ENCODE measurements at regions of chr21 and their contacts with region 1.

Region 1: DNA sequence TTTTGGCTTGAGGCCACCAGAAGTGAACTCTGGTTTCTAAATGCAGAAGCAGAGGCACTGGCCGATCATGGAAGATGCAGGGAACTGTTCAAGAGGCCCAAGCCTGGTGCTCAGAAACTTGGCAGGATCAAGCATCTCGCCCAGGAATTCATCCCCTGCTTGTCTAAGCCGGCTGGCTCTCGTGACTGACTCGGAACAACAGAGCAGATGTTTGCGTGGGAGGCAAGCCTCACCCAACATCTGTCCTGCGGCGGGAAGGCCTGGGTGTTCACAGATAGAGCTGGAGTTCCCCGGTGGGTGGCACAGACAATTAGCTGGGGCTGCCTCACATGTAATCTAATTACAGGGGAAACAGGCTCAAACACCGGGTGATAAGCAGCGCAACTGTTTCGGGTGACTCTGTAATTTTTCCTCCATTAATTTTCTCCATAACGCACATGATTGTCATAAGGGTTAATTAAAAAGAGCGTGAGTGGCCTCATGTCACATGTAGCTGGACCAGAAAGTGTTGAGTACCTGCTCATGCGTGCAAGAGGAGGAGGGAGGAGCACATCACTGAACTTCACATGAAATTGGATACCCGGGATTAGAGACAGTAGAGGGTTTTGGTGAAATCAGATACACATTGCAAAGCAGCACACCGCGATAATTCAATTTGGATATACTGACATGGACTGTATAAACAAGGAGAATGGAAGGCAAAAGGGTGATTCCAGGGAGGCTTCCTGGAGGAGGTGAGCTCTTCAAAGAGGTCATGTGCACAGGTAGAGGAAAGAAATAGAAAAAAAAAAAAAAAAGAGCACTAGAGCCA is 180.0 kb downstream of the ETS2 start:
- DNase-seq: peak; percentile 59
- H3K4me3 ChIP-seq: no peak overlapping the region
- H3K27ac ChIP-seq: peak overlapping the region; percentile 65 to 84 (median 72)
- H3K4me1 ChIP-seq: peaks cover 32 to 61% (median 42%) of the 10 kb centered on the region in 4 donors
- H3K27me3 ChIP-seq: no peaks in the 10 kb centered on the region
- CTCF ChIP-seq: no peak
- EP300 ChIP-seq: no peak
- POLR2A ChIP-seq: no peak

Region 2: GRCh38 chr21:38755681-38756371 is 229.9 kb before region 1 on chr21:
- in situ Hi-C with region 1: no loop called
- intact Hi-C with region 1: loop called (anchors 10 kb)
- DNase-seq: no peak
- H3K4me3 ChIP-seq: no peak overlapping the region
- H3K27ac ChIP-seq: peak overlapping the region; percentile 60 to 77 (median 76)
- H3K4me1 ChIP-seq: peaks cover 0 to 37% (median 18%) of the 10 kb centered on the region in 4 donors
- H3K27me3 ChIP-seq: no peaks in the 10 kb centered on the region
- CTCF ChIP-seq: no peak
- EP300 ChIP-seq: no peak
- POLR2A ChIP-seq: no peak

Region 3: GRCh38 chr21:38819714-38820183 is 166.0 kb before region 1 on chr21:
- in situ Hi-C with region 1: no loop called
- intact Hi-C with region 1: loop called (anchors 5 kb)
- DNase-seq: peak; percentile 68
- H3K4me3 ChIP-seq: no peak overlapping the region
- H3K27ac ChIP-seq: peak overlapping the region; percentile 72 to 84 (median 78)
- H3K4me1 ChIP-seq: peaks cover 33 to 93% (median 87%) of the 10 kb centered on the region in 4 donors
- H3K27me3 ChIP-seq: no peaks in the 10 kb centered on the region
- CTCF ChIP-seq: no peak
- EP300 ChIP-seq: peak; percentile 22
- POLR2A ChIP-seq: no peak

Region 4: DNA sequence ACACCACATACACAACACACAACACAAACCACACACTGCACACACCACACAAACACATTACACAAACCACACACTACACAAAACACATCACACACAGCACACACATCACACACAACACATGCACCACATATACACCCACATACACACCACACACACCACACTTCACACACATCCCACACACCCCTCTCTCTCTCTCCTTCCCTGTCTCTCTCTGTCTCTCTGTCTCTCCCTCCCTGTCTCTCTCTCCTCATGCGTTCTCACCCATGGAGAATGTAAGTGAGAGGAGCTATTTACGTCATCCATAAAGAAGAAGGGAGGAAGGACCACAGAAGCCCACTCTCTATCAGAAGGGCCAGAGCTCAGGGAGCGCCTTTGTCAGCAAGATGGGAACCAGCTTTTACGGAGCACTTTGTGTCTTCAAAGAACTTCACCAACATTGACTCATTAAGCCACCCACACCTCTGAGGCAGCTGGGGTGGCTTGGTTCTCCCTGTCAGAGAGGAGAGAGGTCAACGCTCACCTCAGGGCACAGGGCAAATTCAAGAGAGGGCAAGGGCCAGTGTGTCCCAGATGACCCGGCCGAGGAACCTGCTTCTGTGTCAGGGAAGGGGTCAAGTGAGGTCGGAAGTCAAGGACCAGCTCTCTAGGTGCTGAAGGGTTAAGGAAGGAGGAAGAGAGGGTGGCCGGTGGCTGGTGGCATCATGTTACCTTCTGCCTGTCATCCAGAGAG is 71.3 kb before region 1 on chr21:
- in situ Hi-C with region 1: no loop called
- intact Hi-C with region 1: loop called (anchors 5 kb)
- DNase-seq: peak; percentile 50
- H3K4me3 ChIP-seq: no peak overlapping the region
- H3K27ac ChIP-seq: peak overlapping the region; percentile 86 to 93 (median 90)
- H3K4me1 ChIP-seq: peaks cover 33 to 58% (median 52%) of the 10 kb centered on the region in 4 donors
- H3K27me3 ChIP-seq: no peaks in the 10 kb centered on the region
- CTCF ChIP-seq: no peak
- EP300 ChIP-seq: no peak
- POLR2A ChIP-seq: no peak